ENCODE measurements at regions of chr14 and their contacts with region 1.

Region 1: DNA sequence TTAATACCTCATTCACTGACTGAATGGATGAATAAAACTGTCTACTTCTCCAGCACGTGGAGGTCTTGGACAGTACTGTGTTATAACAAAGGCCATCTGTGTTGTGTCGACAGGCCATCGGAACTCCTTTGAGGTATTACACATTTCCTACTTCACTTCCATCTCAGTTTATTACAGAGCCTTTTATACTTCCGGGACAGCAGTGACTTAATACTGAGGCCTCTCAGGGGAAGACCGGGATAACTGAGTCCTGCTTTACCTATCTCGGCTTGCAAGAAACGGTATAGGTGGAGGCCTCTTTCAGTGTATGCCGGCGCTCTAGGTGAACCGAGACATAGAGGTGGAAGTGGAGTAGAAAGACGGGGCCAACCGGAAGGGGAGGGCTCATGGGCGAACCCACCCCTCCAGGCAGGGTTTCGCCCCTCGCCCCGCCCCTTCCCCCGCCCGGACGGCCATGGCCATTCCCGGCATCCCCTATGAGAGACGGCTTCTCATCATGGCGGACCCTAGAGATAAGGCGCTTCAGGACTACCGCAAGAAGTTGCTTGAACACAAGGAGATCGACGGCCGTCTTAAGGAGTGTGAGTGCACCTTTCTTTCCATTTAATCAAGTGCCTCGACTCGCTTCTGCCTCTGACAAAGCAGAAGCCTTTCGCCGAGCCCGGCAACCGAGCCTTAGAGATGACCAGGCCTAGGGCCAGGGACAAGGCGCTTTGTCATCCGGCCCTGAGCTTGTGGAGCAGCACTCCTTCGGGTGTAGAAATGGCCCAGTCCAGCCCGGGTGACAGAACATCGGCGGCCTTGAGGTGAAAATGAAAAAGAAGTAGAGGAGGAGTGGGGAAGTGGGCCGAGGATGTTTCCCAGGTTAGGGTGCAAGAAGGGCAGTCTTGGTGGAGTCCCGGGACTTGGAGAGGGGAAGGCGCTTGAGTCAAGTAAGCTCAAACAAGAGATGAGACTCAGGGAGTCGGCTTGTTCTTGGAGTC is at the start of gene PSMC6:
- DNase-seq: peak; percentile 97
- H3K4me3 Mint-ChIP-seq: peak within 1 kb of the TSS; percentile 98
- H3K27ac Mint-ChIP-seq: peak within 1 kb of the TSS; percentile 95
- H3K4me1 Mint-ChIP-seq: peaks cover 41% of the 10 kb centered on the region
- H3K27me3 Mint-ChIP-seq: no peaks in the 10 kb centered on the region
- total RNA-seq, gene PSMC6: 109 to 110 TPM

Region 2: DNA sequence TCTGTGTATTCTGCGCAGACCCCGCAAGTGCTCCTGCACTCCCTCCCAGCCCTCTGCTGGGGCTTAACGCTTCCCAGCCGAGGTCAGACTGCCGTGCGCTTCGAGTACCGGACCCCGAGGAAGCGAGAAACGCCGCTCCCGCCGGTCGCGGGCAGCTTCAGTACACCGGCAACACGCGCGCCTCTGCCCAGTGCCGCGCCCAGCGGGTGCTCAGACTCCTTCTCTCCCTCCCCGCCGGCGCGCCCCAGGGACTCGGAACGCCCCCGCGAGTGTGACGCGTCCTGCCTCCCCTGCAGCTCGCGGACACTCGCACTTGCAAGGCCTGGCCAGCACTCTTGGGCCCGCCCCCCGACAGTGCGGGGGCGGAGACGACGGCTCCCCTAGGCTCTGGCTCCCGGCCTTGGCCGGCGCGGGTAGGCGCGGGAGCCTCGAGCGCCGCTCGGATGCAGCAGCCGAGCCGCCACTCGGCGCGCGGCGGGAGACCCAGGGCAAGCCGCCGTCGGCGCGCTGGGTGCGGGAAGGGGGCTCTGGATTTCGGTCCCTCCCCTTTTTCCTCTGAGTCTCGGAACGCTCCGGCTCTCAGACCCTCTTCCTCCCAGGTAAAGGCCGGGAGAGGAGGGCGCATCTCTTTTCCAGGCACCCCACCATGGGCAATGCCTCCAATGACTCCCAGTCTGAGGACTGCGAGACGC is 393.0 kb before region 1 on chr14 and contains the start of gene PTGER2:
- CTCF ChIA-PET with region 1: no interaction called
- POLR2A ChIA-PET with region 1: no interaction called
- intact Hi-C with region 1: loop called (anchors 10 kb)
- DNase-seq: peak; percentile 90
- H3K4me3 Mint-ChIP-seq: peak within 1 kb of the TSS; percentile 97
- H3K27ac Mint-ChIP-seq: peak within 1 kb of the TSS; percentile 90
- H3K4me1 Mint-ChIP-seq: peaks cover 69% of the 10 kb centered on the region
- H3K27me3 Mint-ChIP-seq: peaks cover 6% of the 10 kb centered on the region
- total RNA-seq, gene PTGER2: 10.7 to 12.9 TPM

Region 3: GRCh38 chr14:52695481-52696091 is 11.4 kb before region 1 on chr14 and contains the start of gene ERO1A:
- CTCF ChIA-PET with region 1: interaction called, 5 read pairs
- POLR2A ChIA-PET with region 1: interaction called, 11 read pairs
- intact Hi-C with region 1: loop called (anchors 1 kb)
- DNase-seq: peak; percentile 80
- H3K4me3 Mint-ChIP-seq: peak within 1 kb of the TSS; percentile 100
- H3K27ac Mint-ChIP-seq: peak within 1 kb of the TSS; percentile 99
- H3K4me1 Mint-ChIP-seq: peaks cover 35% of the 10 kb centered on the region
- H3K27me3 Mint-ChIP-seq: no peaks in the 10 kb centered on the region
- total RNA-seq, gene ERO1A: 138 to 153 TPM

Region 4: DNA sequence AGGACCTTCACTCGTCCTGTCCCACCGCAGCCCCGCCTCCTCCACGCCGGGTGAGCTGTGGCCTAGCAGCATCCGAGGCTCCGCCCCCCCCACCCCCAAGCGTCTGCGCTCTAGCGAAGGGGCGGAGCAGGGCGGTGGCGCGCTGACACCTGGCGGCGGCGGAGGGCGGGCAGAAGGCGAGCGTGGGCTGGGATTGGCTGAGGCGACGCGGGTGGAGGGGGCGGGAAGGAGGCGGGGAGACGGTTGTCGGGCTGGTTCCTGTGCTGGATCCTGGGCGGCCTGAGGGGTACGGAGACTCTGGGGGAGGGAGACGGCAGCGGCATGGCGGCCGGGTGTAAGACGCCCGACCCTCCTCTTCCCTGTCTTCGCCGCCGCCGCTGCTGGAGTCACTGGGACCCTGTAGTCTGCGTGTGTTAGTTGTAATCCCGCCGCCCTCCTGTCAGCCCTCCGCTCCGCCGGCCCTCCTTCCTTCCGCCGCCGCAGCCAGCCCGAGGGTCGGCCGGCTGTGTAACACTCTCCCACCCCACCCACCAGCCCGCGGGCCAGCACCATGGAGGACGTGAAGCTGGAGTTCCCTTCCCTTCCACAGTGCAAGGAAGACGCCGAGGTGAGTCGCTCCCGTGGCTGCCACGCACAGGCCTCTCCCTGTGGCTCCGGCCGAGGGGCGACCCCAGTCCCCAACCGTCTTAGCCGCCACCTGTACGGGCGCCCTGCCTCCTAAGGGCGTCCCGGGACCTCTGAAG is 23.1 kb after region 1 on chr14 and contains the start of gene STYX:
- CTCF ChIA-PET with region 1: interaction called, 3 read pairs
- POLR2A ChIA-PET with region 1: interaction called, 6 read pairs
- intact Hi-C with region 1: loop called (anchors 1 kb)
- DNase-seq: peak; percentile 99
- H3K4me3 Mint-ChIP-seq: peak within 1 kb of the TSS; percentile 87
- H3K27ac Mint-ChIP-seq: peak within 1 kb of the TSS; percentile 82
- H3K4me1 Mint-ChIP-seq: peaks cover 29% of the 10 kb centered on the region
- H3K27me3 Mint-ChIP-seq: no peaks in the 10 kb centered on the region
- total RNA-seq, gene STYX: 15.9 to 17.0 TPM

Region 5: DNA sequence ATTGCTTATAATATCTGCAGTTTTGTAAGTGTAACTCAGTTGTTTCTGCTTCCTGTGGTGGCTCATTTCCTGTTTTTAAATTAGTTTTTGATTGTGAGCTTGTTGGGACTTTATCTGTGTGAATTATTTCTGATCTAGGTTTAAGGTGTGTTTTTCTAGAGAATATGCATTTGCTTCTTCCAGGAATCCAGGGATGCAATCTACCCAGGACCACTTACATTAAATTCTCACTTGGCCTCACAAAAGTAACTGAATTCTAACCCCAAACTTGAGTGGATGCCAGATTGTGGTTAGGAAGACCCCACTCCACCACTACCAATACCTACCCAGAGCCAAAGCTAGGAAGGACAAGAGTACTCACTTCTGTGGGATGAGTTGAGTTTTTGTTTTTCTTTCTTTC is 34.9 kb after region 1 on chr14:
- CTCF ChIA-PET with region 1: interaction called, 4 read pairs
- POLR2A ChIA-PET with region 1: no interaction called
- intact Hi-C with region 1: loop called (anchors 1 kb)
- DNase-seq: no peak
- H3K4me3 Mint-ChIP-seq: peak overlapping the region; percentile 73
- H3K27ac Mint-ChIP-seq: peak overlapping the region; percentile 98
- H3K4me1 Mint-ChIP-seq: peaks cover 68% of the 10 kb centered on the region
- H3K27me3 Mint-ChIP-seq: no peaks in the 10 kb centered on the region

Region 6: DNA sequence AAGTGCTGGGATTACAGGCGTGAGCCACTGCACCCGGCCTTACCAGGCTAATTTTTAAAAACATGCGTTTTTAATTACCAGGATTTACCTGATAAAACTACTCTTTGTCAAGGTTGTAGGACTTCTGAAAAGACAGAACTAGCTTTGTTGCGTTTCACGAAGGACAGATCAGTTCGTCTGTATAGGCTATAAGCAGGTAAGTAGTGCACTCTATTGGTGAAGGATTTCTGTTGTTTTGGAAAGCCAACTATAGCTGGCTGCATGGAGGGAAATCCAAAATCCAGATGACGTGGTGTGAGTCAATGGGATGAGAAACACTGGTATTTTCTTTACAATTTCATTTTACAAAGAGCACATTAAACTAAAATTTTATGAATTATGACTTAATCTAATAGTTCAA is 69.8 kb after region 1 on chr14:
- CTCF ChIA-PET with region 1: no interaction called
- POLR2A ChIA-PET with region 1: no interaction called
- intact Hi-C with region 1: loop called (anchors 5 kb)
- DNase-seq: no peak
- H3K4me3 Mint-ChIP-seq: no peak overlapping the region
- H3K27ac Mint-ChIP-seq: no peak overlapping the region
- H3K4me1 Mint-ChIP-seq: no peaks in the 10 kb centered on the region
- H3K27me3 Mint-ChIP-seq: no peaks in the 10 kb centered on the region

Region 7: DNA sequence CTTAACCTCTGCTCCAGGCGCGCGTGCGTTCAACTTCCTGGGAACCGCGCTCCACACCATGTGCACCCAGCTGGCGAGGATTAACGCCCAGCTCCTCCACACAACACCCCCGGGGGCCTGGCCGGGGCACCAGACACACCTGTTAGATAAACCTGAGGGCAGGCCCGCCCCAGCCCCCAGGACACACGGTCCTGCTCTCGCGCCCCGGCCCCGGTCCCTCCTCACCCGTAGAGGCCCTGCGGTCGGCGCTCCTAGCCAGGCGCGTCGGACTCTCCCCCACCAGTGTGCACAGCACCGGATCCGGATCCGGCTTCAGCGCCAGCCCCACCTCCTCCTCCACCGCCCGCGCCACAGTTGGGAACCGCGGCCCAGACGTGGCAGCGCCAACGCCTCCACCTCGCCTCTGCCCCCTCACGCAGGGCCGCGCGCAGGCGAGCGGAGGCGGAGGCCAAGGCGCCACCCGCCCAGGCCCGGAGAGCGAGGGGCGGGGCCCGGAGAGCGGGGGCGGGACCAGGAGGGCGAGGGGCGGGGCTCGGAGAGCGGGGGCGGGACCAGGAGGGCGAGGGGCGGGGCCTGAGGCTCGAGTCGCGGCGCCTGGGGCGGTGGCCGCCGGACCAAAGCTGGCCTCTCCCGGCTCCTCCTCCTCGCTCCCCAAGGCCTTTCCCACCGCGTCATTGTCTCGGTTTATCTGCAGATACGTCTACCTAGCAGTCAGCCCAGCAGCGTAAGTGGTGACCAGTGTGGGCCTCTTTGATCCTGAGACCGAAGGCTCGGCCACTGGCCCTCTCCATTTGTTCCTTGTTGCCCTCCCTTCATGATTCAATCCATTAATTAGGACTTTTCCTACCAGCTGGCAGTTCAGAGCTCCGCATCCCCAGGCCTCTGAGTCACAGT is 84.4 kb after region 1 on chr14 and contains the start of gene GNPNAT1:
- CTCF ChIA-PET with region 1: no interaction called
- POLR2A ChIA-PET with region 1: no interaction called
- intact Hi-C with region 1: loop called (anchors 1 kb)
- DNase-seq: peak; percentile 88
- H3K4me3 Mint-ChIP-seq: peak within 1 kb of the TSS; percentile 94
- H3K27ac Mint-ChIP-seq: peak within 1 kb of the TSS; percentile 54
- H3K4me1 Mint-ChIP-seq: peaks cover 41% of the 10 kb centered on the region
- H3K27me3 Mint-ChIP-seq: no peaks in the 10 kb centered on the region
- total RNA-seq, gene GNPNAT1: 30.4 to 31.4 TPM